ENCODE measurements at regions of chr6 and their contacts with region 1.

Region 1: DNA sequence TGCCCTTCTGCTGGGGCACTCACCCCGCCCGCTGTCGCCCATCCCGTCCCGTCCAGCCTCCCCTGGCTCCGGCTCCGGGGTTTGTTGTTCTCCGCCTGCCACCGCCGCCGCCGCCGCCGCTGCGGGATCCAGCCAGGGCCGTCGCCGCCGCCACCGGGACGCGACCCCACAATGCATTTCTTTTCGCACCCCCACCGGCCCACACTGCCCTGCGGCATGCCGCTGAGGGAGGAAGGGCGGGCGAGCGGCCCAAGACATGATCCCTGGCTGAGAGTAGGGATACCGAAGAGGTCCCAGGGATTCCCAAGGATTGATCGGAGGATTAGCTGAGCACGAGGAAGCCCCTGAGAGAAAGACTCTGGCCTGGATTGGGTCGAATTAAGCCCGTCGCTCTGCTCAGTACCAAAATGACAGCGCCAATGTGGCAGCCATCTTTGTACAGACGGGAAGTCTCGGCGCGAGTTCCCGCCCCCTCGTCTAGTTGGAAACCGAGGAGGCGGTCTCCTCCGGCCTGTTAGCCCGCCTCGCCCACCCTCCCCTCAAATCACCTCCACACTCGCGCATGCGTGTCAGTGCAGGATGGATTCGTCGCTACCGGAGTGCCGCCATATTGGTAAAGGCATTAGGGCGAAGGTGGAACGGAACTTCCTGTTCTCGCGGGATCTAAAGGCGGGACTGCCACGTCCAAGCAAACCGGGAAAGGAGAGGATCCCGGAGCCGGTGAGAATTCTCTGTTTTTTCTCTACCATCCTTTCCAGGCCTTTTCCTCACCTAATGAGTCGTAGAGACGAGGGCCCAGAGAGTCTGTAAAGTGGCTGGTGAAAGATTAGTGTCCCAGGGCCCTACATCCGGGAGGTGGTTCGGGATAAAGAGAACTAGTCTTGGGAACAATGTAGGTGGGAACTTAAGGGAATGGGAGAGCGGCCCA is at the starts of genes RXRB and SLC39A7:
- DNase-seq: peak; percentile 99
- H3K4me3 ChIP-seq: peak within 1 kb of the TSS; percentile 84
- H3K27ac ChIP-seq: peak within 1 kb of the TSS; percentile 96
- H3K4me1 ChIP-seq: peaks cover 6% of the 10 kb centered on the region
- H3K27me3 ChIP-seq: no peaks in the 10 kb centered on the region
- CTCF ChIP-seq: peak in 1 of 4 experiments; percentile 4
- POLR2A ChIP-seq: peak; percentile 56
- total RNA-seq, gene RXRB: 30.6 to 40.5 TPM
- total RNA-seq, gene SLC39A7: 109 to 182 TPM

Region 2: DNA sequence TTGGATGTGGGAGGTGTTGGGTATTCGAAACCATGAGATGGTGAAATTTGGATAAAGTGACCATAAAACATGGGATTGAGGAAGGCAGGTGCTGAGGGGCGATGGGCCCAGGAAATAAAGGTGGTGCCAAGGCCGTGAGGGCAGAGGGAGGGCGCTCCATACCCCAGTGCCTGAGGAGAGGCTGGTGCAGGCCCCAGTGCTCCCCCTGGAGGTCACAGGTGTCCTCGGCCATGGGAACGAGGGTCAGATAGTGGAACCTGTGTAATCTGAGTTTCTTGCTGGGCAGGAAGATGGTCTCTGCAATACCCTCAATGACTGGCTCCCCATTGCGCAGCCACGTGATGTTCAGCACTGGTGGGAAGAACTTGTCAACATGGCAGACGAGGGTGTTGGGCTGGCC is 108.5 kb before region 1 on chr6:
- intact Hi-C with region 1: no loop called
- DNase-seq: no peak
- H3K4me3 ChIP-seq: no peak overlapping the region
- H3K27ac ChIP-seq: no peak overlapping the region
- H3K4me1 ChIP-seq: no peaks in the 10 kb centered on the region
- H3K27me3 ChIP-seq: no peaks in the 10 kb centered on the region
- CTCF ChIP-seq: peak in 2 of 4 experiments; percentile 37 to 45
- POLR2A ChIP-seq: no peak

Region 3: DNA sequence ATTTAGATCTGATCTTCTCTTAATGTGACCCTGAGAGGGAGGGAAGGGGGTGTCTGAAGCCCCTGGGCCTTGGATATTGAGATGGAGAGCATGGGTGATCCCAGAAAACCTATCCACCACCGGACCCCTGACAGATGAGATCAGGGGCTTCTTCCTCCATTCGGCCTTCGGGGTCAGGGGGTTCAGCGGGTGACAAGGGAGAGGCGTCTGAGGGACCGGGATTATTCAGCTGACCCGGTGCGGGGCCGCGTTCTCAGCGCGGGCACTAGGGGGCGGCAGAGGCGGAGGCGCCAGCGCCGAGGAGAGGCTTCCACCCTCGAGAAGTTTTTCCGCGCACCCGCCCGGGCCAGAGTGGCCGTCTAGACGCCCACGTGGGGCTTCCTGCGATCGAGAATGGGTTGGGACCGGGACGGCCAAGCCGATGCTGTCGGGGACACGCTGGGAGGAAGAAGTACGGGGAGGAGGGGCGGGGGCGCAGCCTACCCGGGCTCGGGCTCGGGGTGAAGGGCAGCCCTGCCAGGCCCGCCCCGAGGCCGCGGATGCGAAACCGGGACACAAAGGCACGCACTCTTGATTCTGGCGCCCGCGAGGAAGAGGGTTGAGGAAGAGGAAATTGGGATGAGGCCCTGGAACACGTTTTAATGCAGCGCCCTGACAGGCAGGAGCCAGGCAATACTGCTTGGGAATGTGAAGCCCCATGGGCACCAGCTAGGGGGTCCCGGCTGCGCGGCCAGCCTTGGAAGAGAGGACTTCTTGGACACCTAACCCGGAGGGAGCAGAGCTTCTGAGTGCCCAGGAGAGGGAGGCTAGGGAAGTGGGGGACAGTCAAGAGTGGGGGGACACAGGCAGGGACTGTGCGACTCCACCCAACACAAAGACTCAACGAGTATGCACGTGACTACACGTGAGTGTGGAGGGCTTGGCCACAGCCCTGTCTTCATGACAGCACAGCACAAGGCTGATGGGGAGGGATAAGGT is 38.8 kb before region 1 on chr6:
- intact Hi-C with region 1: loop called (anchors 5 kb)
- DNase-seq: peak; percentile 46
- H3K4me3 ChIP-seq: peak overlapping the region; percentile 30 to 35
- H3K27ac ChIP-seq: peak overlapping the region; percentile 43 to 50
- H3K4me1 ChIP-seq: no peaks in the 10 kb centered on the region
- H3K27me3 ChIP-seq: no peaks in the 10 kb centered on the region
- CTCF ChIP-seq: peak; percentile 77 to 92 (median 82)
- POLR2A ChIP-seq: no peak

Region 4: GRCh38 chr6:33276864-33277662 is 76.6 kb after region 1 on chr6 and contains the start of gene B3GALT4:
- intact Hi-C with region 1: no loop called
- DNase-seq: peak; percentile 76
- H3K4me3 ChIP-seq: peak within 1 kb of the TSS; percentile 55 to 74
- H3K27ac ChIP-seq: peak within 1 kb of the TSS; percentile 87
- H3K4me1 ChIP-seq: peaks cover 28% of the 10 kb centered on the region
- H3K27me3 ChIP-seq: no peaks in the 10 kb centered on the region
- CTCF ChIP-seq: peak; percentile 17 to 62 (median 41)
- POLR2A ChIP-seq: peak; percentile 60
- total RNA-seq, gene B3GALT4: 15.8 to 21.4 TPM

Region 5: GRCh38 chr6:33323623-33323948 is 123.1 kb after region 1 on chr6:
- intact Hi-C with region 1: no loop called
- DNase-seq: no peak
- H3K4me3 ChIP-seq: peak overlapping the region; percentile 52 to 67
- H3K27ac ChIP-seq: peak overlapping the region; percentile 81 to 87
- H3K4me1 ChIP-seq: peaks cover 14% of the 10 kb centered on the region
- H3K27me3 ChIP-seq: no peaks in the 10 kb centered on the region
- CTCF ChIP-seq: no peak
- POLR2A ChIP-seq: no peak

Measured in prostate gland (tissue), 2 donors.